ENCODE measurements at regions of chr14 and their contacts with region 1.

Region 1: DNA sequence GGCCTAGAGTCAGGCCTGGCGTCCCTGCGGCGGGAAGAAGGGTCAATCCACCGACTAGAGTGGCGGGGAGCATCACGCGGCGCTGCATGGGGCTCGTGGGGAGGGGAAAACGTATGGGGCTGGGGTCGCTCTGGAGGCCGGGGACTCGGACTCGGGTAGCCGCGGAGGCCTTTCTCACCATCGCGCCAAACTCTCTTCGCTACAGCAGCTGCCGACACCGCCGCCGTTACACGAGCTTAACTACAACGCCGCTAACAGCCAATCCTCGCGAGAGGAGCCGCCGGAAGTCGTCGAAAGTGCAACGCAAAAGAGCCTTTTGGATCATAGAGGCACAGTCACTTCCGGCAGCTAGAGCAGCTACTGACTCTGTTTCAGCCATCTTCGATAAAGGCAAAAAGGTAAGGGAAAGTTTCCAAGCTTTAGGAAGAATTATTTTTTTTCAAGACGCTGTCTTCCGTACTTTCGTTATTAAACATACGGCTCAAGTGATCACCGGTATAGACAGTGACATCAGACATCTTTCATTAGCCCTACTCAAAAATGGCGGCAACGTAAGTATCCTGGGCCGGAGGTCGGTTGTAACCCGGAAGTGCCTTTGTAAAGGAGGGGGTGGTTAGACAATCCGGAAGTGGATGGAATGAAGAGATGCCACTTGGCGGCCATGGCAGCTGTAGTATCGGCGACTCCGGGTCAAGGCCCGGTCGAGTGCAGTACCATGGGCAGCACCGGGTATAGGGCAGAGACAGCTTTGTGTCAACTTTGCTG is at the starts of genes ERH and SLC39A9:
- DNase-seq: peak; percentile 97
- H3K4me3 Mint-ChIP-seq: peak within 1 kb of the TSS; percentile 89
- H3K27ac Mint-ChIP-seq: peak within 1 kb of the TSS; percentile 100
- H3K4me1 Mint-ChIP-seq: peaks cover 66% of the 10 kb centered on the region
- H3K27me3 Mint-ChIP-seq: no peaks in the 10 kb centered on the region
- total RNA-seq, gene ERH: 338 to 348 TPM
- total RNA-seq, gene SLC39A9: 53.4 to 54.5 TPM

Region 2: DNA sequence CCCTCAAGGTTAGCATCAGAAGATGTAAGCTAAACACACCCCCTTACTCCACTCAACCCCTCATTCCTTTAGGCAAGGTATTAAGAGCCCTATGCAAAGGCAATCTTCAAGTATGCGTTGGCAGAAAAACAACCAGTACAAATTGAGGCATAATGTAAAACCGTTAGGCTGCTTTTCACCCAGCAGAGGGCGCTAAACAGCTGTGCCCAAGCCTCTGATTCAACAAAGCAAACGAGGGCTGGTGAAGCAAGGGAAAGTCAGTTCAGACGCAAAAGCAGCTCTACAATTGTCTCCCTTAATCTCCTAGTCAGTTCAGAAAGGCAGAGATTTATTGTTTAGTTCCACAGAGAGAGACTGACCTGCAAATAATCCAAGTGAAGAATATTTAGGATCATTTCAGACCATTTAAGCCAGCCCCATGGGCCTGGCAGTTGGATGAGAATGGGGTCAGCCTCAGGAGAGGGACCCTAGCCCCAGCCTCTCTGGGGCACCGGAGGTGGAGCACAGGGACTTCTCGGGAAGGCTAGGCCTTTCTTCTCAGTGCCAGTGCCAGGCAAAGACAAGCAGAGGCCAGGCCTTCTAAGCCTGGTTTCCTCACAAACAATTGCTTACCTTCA is 268.9 kb before region 1 on chr14:
- CTCF ChIA-PET with region 1: interaction called, 3 read pairs
- intact Hi-C with region 1: loop called (anchors 1 kb)
- DNase-seq: peak; percentile 89
- H3K4me3 Mint-ChIP-seq: no peak overlapping the region
- H3K27ac Mint-ChIP-seq: peak overlapping the region; percentile 26
- H3K4me1 Mint-ChIP-seq: peaks cover 67% of the 10 kb centered on the region
- H3K27me3 Mint-ChIP-seq: no peaks in the 10 kb centered on the region

Region 3: DNA sequence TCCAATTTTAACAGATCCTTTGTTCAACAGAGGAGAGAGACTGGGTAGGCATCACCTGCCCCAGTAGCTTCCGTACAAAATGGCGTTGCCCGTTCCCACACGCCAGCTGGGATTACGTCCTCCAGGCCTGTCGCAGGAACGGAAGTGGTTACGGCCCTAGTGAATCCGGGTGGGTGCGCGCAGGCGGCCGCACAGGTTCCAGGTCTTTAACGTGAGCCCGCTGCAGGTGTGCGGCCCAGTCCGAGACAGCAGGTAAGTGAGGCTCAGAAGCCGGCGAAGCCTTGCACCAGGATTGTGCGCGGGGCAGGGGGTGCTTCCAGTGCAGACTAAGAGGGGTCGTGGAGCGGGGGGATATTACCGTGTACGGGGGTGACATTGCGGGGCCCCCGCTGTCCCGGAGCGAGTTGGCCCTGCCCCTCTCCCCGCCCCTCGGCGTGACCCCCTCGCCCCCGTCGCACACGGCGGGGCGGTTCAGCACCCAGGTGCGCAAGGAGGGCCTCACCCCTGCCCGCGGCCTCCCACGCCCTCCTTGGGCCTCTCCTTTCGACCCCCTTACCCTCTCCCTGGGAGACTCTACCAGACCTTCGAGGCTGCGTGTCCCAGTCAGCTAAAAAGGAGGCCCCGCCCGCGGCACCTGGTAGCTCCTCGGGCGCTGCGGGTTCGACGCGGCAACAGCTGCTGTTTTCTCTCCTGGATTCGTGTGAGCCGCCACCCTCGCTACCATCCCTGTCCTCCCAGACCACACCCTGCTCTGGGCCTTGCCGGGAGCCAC is 206.7 kb before region 1 on chr14 and contains the start of gene EXD2:
- CTCF ChIA-PET with region 1: no interaction called
- intact Hi-C with region 1: loop called (anchors 1 kb)
- DNase-seq: peak; percentile 91
- H3K4me3 Mint-ChIP-seq: peak within 1 kb of the TSS; percentile 93
- H3K27ac Mint-ChIP-seq: peak within 1 kb of the TSS; percentile 76
- H3K4me1 Mint-ChIP-seq: peaks cover 23% of the 10 kb centered on the region
- H3K27me3 Mint-ChIP-seq: no peaks in the 10 kb centered on the region
- total RNA-seq, gene EXD2: 11.8 to 12.7 TPM

Region 4: GRCh38 chr14:69358233-69358963 is 39.8 kb before region 1 on chr14:
- CTCF ChIA-PET with region 1: no interaction called
- intact Hi-C with region 1: loop called (anchors 1 kb)
- DNase-seq: peak; percentile 75
- H3K4me3 Mint-ChIP-seq: no peak overlapping the region
- H3K27ac Mint-ChIP-seq: peak overlapping the region; percentile 1
- H3K4me1 Mint-ChIP-seq: peaks cover 34% of the 10 kb centered on the region
- H3K27me3 Mint-ChIP-seq: no peaks in the 10 kb centered on the region

Region 5: GRCh38 chr14:69460093-69460701 is 62.0 kb after region 1 on chr14:
- CTCF ChIA-PET with region 1: interaction called, 19 read pairs
- intact Hi-C with region 1: no loop called
- DNase-seq: peak; percentile 80
- H3K4me3 Mint-ChIP-seq: no peak overlapping the region
- H3K27ac Mint-ChIP-seq: no peak overlapping the region
- H3K4me1 Mint-ChIP-seq: no peaks in the 10 kb centered on the region
- H3K27me3 Mint-ChIP-seq: no peaks in the 10 kb centered on the region